Aorta (tissue), 5 donors: ENCODE measurements at regions of chr16 and their contacts with region 1.

Region 1: DNA sequence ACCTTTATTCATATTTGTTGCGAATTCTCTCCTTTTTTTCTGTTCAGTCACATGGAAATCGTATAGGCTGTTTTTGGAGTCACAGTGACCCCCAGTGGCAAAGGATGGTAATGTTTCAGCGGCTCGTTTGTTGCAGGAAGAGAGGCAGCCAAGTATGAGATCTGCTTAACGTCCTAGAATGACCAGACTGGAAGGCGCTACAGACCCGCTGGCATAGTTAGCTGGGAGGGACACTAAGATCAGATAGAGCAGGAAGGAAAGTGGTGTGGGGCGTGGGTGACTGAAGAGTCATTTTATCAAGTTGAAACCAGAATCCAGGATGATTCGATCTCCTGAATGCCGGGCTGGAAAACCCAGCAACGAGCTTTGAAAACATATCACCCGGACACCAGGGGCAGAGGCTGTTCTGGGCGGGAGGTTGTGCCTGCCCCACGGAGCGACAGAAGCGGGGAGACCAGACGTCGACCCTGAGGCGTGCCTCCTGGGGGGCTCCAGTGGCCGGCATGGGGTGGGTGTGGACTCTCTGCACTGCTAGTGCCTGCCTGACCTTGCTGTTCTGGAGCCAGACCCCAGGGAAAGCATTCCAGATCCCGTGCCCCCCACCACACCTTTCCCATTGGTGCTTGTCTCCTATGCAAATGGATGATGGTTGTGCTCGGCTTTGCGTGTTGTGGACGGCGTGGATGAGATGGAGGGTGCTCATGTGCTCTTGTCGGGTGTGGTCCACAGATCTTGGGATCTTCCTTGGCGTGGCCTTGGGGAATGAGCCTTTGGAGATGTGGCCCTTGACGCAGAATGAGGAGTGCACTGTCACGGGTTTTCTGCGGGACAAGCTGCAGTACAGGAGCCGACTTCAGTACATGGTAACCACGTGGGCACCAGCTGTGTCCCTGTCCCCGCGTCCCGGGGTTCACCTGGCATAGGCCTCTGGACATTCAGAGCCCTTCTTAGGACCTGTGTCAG is 7.7 kb downstream of the IL34 start:
- DNase-seq: peak; percentile 82 to 90
- ATAC-seq: peak; percentile 87
- H3K4me3 ChIP-seq: no peak overlapping the region
- H3K27ac ChIP-seq: no peak overlapping the region
- H3K4me1 ChIP-seq: no peaks in the 10 kb centered on the region
- H3K27me3 ChIP-seq: no peaks in the 10 kb centered on the region

Region 2: GRCh38 chr16:70364399-70364798 is 289.7 kb before region 1 on chr16:
- intact Hi-C with region 1: loop called (anchors 5 to 10 kb)
- DNase-seq: no peak
- ATAC-seq: no peak
- H3K4me3 ChIP-seq: no peak overlapping the region
- H3K27ac ChIP-seq: no peak overlapping the region
- H3K4me1 ChIP-seq: no peaks in the 10 kb centered on the region
- H3K27me3 ChIP-seq: no peaks in the 10 kb centered on the region

Region 3: GRCh38 chr16:70481929-70482536 is 172.1 kb before region 1 on chr16:
- intact Hi-C with region 1: no loop called
- DNase-seq: no peak
- ATAC-seq: no peak
- H3K4me3 ChIP-seq: no peak overlapping the region
- H3K27ac ChIP-seq: peak overlapping the region in 1 of 2 donors; percentile 53
- H3K4me1 ChIP-seq: no peaks in the 10 kb centered on the region
- H3K27me3 ChIP-seq: no peaks in the 10 kb centered on the region

Region 4: GRCh38 chr16:70523076-70523742 is 130.9 kb before region 1 on chr16 and contains the start of gene COG4:
- intact Hi-C with region 1: loop called (anchors 2 kb)
- DNase-seq: peak; percentile 93 to 95
- ATAC-seq: peak; percentile 96
- H3K4me3 ChIP-seq: peak within 1 kb of the TSS; percentile 85 to 94
- H3K27ac ChIP-seq: peak within 1 kb of the TSS; percentile 75 to 77
- H3K4me1 ChIP-seq: peaks cover 0 to 5% of the 10 kb centered on the region in 2 donors
- H3K27me3 ChIP-seq: no peaks in the 10 kb centered on the region
- total RNA-seq, gene COG4: 35.7 to 44.6 TPM

Region 5: GRCh38 chr16:70529051-70529777 is 124.9 kb before region 1 on chr16:
- intact Hi-C with region 1: loop called (anchors 2 kb)
- DNase-seq: no peak
- ATAC-seq: no peak
- H3K4me3 ChIP-seq: no peak overlapping the region
- H3K27ac ChIP-seq: no peak overlapping the region
- H3K4me1 ChIP-seq: no peaks in the 10 kb centered on the region
- H3K27me3 ChIP-seq: no peaks in the 10 kb centered on the region

Region 6: DNA sequence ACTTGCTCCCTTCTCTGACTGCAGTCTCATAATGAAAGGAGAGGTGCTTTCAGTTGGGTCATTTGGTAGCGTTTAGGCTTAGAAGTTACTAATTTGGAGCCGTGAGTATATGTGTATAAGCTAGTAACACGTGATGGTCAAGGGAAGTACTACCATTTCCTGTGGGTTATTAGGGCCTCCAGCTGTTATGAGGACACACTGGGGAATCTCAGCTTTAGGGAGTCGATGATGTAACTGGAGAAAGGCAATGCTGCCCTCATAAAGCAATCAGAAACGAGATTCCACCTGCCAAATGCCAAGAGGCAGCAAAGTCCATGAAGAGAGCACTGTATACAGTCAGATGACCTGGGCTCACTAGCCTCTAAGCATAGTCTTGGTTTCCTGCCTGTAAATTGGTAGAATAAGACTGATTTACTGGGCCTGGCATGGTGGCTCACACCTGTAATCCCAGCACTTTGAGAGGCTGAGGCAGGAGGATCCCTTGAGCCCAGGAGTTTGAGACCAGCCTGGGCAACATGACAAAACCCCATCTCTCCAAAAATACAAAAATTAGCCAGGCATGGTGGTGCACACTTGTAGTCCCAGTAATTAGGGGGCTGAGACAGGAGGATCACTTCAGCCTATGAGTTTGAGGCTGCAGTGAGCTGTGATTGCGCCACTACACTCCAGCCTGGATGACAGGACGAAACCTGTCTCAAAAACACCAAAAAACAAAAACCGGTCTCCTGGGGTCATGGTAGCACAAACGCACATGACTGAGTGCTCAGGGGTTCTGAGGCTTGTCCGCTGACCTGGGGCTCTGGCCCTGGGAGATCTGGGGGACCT is 77.4 kb before region 1 on chr16:
- intact Hi-C with region 1: loop called (anchors 5 kb)
- DNase-seq: no peak
- ATAC-seq: no peak
- H3K4me3 ChIP-seq: no peak overlapping the region
- H3K27ac ChIP-seq: peak overlapping the region; percentile 69 to 94
- H3K4me1 ChIP-seq: peaks cover 7% of the 10 kb centered on the region in 2 donors
- H3K27me3 ChIP-seq: no peaks in the 10 kb centered on the region